ENCODE measurements at regions of chr15 and their contacts with region 1.

Region 1: GRCh38 chr15:75625542-75626347 is at the start of gene SNUPN:
- DNase-seq: peak; percentile 98 to 99
- ATAC-seq: peak; percentile 95
- H3K4me3 ChIP-seq: peak within 1 kb of the TSS; percentile 96
- H3K27ac ChIP-seq: peak within 1 kb of the TSS; percentile 98 to 100
- H3K4me1 ChIP-seq: peaks cover 26% of the 10 kb centered on the region
- CTCF ChIP-seq: no peak
- EP300 ChIP-seq: no peak
- POLR2A ChIP-seq: peak; percentile 90
- RAD21 ChIP-seq: no peak
- polyA plus RNA-seq, gene SNUPN: 33.6 and 38.5 TPM in 2 replicates

Region 2: GRCh38 chr15:75407083-75407482 is 218.7 kb before region 1 on chr15:
- CTCF ChIA-PET with region 1: no interaction called
- POLR2A ChIA-PET with region 1: no interaction called
- DNase-seq: no peak
- ATAC-seq: no peak
- H3K4me3 ChIP-seq: no peak overlapping the region
- H3K27ac ChIP-seq: no peak overlapping the region
- H3K4me1 ChIP-seq: no peaks in the 10 kb centered on the region
- CTCF ChIP-seq: no peak
- EP300 ChIP-seq: no peak
- POLR2A ChIP-seq: no peak
- RAD21 ChIP-seq: no peak

Region 3: GRCh38 chr15:75453703-75454470 is 171.9 kb before region 1 on chr15:
- CTCF ChIA-PET with region 1: interaction called, 3 read pairs
- POLR2A ChIA-PET with region 1: interaction called, 13 read pairs
- DNase-seq: peak; percentile 99 to 100
- ATAC-seq: peak; percentile 22 to 57
- H3K4me3 ChIP-seq: peak overlapping the region; percentile 74
- H3K27ac ChIP-seq: peak overlapping the region; percentile 92
- H3K4me1 ChIP-seq: peaks cover 18% of the 10 kb centered on the region
- CTCF ChIP-seq: no peak
- EP300 ChIP-seq: no peak
- POLR2A ChIP-seq: peak; percentile 53
- RAD21 ChIP-seq: no peak; a peak in 1 of 5 replicates

Region 4: DNA sequence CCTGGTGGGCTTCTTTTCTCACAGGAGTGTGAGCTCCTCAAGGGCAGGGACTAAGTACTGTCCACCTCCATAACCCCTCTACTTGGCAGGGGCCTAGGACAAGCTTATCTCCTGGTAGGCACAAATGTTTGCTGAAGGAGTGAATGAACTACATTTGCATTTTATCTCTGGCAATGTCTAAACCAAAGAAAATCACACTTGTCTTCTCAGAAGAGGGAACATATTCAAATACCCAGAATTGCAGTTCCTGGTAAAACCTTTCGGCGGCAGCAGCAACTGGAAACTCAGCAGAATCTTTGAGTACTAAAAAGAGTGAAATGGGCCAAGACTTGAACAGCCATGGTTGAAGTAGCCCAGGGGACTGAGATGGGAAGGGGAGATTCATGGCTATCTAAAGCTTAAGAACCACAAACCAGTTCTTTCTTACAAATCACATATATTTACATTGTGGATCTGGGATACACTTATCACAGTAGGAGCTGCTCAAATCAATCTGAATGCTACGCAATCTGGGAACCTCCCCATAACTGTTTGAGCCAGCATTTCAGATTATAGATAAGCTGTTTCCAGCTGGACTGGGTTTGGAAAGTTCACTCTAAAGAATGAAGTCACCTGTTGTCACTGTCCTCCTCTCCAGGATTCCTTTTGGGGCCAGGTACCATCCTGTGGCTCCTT is 27.9 kb before region 1 on chr15:
- CTCF ChIA-PET with region 1: interaction called, 22 read pairs
- POLR2A ChIA-PET with region 1: no interaction called
- DNase-seq: peak; percentile 33 to 38
- ATAC-seq: peak; percentile 45 to 65; a peak in 2 of 6 replicates
- H3K4me3 ChIP-seq: no peak overlapping the region
- H3K27ac ChIP-seq: no peak overlapping the region
- H3K4me1 ChIP-seq: no peaks in the 10 kb centered on the region
- CTCF ChIP-seq: peak; percentile 36; the same call in 2 of the 3 replicates
- EP300 ChIP-seq: no peak
- POLR2A ChIP-seq: no peak
- RAD21 ChIP-seq: peak in 1 of 2 experiments; percentile 36; a peak in 2 of 5 replicates

Measured in A549 (cell line).